ENCODE measurements at regions of chr7 and their contacts with region 1.

Region 1: GRCh38 chr7:114567416-114567815 is 152.8 kb downstream of the FOXP2 start:
- DNase-seq: no peak
- ATAC-seq: no peak
- H3K4me3 ChIP-seq: no peak overlapping the region
- H3K27ac ChIP-seq: no peak overlapping the region
- H3K4me1 ChIP-seq: no peaks in the 10 kb centered on the region
- H3K27me3 ChIP-seq: no peaks in the 10 kb centered on the region
- CTCF ChIP-seq: no peak
- POLR2A ChIP-seq: no peak
- RAD21 ChIP-seq: no peak

Region 2: DNA sequence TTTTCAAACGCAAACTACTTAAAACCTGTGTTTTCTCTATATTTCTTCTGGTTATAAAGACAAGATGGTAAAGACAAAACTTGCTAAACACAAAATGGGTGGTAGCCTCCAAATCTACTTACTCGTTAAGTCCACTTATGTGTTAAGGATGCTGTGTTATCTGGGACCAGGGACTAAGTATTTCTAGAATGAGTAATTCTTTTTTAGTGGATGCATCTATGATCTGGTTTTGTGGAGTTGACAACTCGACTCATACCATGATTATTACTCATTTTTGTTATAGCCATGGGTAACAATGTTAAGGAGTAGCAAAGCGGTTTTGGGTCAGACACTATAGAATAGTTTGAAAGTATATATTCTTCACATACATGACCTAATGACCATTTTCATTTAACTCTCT is 392.3 kb before region 1 on chr7:
- CTCF ChIA-PET with region 1: no interaction called
- POLR2A ChIA-PET with region 1: no interaction called
- RAD21 ChIA-PET with region 1: no interaction called
- intact Hi-C with region 1: no loop called
- DNase-seq: no peak
- ATAC-seq: no peak
- H3K4me3 ChIP-seq: no peak overlapping the region
- H3K27ac ChIP-seq: no peak overlapping the region
- H3K4me1 ChIP-seq: no peaks in the 10 kb centered on the region
- H3K27me3 ChIP-seq: no peaks in the 10 kb centered on the region
- CTCF ChIP-seq: no peak
- POLR2A ChIP-seq: no peak
- RAD21 ChIP-seq: no peak

Region 3: DNA sequence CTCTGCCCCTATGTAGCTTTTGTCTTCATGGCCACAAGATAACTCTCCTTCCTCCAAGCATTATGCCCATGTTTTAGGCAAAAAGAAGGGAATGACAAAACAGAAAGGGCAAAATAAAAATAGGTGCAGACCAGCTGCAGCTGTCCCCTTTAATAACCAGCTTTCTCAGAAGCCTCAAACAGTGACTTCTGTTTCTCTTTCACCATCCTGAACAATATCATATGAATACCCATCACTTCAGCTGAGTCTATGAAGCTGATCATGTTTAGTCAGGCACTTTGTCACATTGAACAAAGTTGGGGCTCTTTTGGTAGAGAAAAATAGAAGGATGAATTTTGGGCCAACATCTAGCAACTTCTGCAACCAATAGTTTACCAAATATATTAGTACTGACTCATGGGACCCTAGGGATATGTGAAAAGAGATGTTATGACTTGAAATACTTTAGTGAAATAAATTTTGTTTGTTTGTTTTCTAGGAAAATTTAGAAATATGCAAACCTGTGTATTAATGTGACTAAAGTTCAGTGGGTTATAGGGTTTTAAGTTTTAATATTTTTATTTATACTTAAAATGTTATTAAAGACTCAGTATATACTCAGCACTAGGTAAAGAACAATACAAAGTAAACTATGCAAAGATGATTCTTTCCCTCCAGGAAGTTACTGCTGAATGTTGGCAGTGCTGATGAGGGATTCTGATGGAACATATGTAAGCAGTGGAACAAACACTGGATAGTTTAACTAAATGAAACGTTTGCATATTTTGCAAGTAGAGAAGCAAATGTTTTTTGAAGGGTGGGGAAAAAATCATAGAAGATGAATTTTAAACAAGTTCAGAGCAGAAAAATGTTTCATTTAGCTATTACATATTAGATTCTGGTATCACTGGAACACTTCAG is 19.1 kb before region 1 on chr7:
- CTCF ChIA-PET with region 1: no interaction called
- POLR2A ChIA-PET with region 1: no interaction called
- RAD21 ChIA-PET with region 1: no interaction called
- intact Hi-C with region 1: loop called (anchors 1 kb)
- DNase-seq: no peak
- ATAC-seq: no peak
- H3K4me3 ChIP-seq: no peak overlapping the region
- H3K27ac ChIP-seq: no peak overlapping the region
- H3K4me1 ChIP-seq: no peaks in the 10 kb centered on the region
- H3K27me3 ChIP-seq: no peaks in the 10 kb centered on the region
- CTCF ChIP-seq: no peak
- POLR2A ChIP-seq: no peak
- RAD21 ChIP-seq: no peak